Ascending aorta (tissue), 2 donors: ENCODE measurements at regions of chr15 and their contacts with region 1.

Region 1: GRCh38 chr15:34969340-34970097 is at the start of gene AQR:
- DNase-seq: peak; percentile 83 to 98
- H3K4me3 ChIP-seq: peak within 1 kb of the TSS; percentile 79 to 86
- H3K27ac ChIP-seq: peak within 1 kb of the TSS; percentile 79 to 81
- H3K4me1 ChIP-seq: peaks cover 0 to 27% of the 10 kb centered on the region in 2 donors
- H3K27me3 ChIP-seq: no peaks in the 10 kb centered on the region
- CTCF ChIP-seq: peak; percentile 74 to 95 (median 83)
- total RNA-seq, gene AQR: 17.5 TPM

Region 2: GRCh38 chr15:34437687-34438086 is 531.8 kb before region 1 on chr15 and contains the start of gene GOLGA8A:
- intact Hi-C with region 1: no loop called
- DNase-seq: no peak
- H3K4me3 ChIP-seq: peak within 1 kb of the TSS; percentile 54 to 97
- H3K27ac ChIP-seq: peak within 1 kb of the TSS; percentile 34 to 70
- H3K4me1 ChIP-seq: no peaks in the 10 kb centered on the region
- H3K27me3 ChIP-seq: no peaks in the 10 kb centered on the region
- CTCF ChIP-seq: no peak
- total RNA-seq, gene GOLGA8A: 35.0 TPM

Region 3: GRCh38 chr15:34987985-34988873 is 18.7 kb after region 1 on chr15 and contains the start of gene ZNF770:
- intact Hi-C with region 1: loop called (anchors 1 kb)
- DNase-seq: peak in 1 of 2 donors; percentile 86
- H3K4me3 ChIP-seq: peak within 1 kb of the TSS; percentile 71 to 85
- H3K27ac ChIP-seq: peak within 1 kb of the TSS; percentile 95 to 97
- H3K4me1 ChIP-seq: peaks cover 0 to 24% of the 10 kb centered on the region in 2 donors
- H3K27me3 ChIP-seq: no peaks in the 10 kb centered on the region
- CTCF ChIP-seq: no peak
- total RNA-seq, gene ZNF770: 87.7 TPM